ENCODE measurements at regions of chr12 and their contacts with region 1.

Region 1: DNA sequence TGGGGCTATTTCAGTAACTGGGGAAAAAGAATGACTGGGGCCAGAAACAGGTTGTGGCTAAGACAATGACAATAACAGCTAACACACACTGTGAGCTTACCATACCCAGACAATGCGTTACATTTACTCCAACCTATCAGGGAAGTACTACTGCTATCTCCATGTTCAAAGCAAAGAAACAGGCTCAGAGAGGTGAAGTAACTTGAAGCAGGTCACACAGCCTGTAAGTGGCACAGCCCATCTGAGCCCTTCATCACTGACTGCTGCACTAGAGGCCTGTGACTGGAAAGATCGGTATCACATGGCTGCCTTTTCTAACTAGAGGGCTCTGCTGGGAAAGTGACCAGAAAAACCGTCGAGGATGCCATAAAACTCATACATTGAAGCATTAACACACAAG is 7.9 kb downstream of the GCN1 start:
- DNase-seq: no peak
- H3K4me3 ChIP-seq: no peak overlapping the region
- H3K27ac ChIP-seq: no peak overlapping the region
- H3K4me1 ChIP-seq: no peaks in the 10 kb centered on the region
- H3K27me3 ChIP-seq: no peaks in the 10 kb centered on the region
- CTCF ChIP-seq: no peak

Region 2: DNA sequence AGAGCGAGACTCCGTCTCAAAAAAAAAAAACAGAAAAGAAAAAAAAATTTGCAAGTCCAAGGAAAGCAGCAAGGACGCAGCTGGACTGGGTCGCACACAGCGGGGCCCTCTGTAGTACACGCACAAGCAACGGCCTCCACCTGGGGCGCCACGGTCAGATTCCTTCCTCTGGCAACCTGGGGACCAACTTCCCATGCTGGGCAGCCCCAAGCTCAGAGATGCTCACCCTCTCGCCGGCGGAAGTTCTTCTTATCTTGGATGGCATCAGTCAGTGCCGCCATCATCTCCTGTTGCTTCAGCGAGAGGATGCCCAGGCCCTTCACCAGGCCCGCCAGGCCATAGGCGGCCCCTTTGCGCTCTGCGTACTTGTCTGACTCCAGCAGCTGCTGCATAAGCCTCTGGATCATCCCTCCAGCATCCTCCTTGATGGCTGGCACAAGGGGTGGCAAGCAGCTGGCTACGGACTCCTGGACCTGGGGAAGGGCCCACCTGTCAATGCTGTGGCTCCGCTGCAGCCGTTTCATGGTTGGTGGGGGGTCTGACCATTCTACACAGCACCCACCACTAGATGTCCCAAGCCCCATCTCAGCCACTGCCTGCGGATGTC is 35.6 kb before region 1 on chr12:
- dilution Hi-C with region 1: loop called (anchors 5 kb)
- DNase-seq: no peak
- H3K4me3 ChIP-seq: no peak overlapping the region
- H3K27ac ChIP-seq: no peak overlapping the region
- H3K4me1 ChIP-seq: no peaks in the 10 kb centered on the region
- H3K27me3 ChIP-seq: no peaks in the 10 kb centered on the region
- CTCF ChIP-seq: no peak

Region 3: GRCh38 chr12:120352117-120352516 is 165.5 kb after region 1 on chr12:
- dilution Hi-C with region 1: no loop called
- DNase-seq: no peak
- H3K4me3 ChIP-seq: no peak overlapping the region
- H3K27ac ChIP-seq: no peak overlapping the region
- H3K4me1 ChIP-seq: peaks cover 3% of the 10 kb centered on the region
- H3K27me3 ChIP-seq: no peaks in the 10 kb centered on the region
- CTCF ChIP-seq: no peak

Measured in keratinocyte (primary cell).